ENCODE measurements at regions of chr6 and their contacts with region 1.

Region 1: DNA sequence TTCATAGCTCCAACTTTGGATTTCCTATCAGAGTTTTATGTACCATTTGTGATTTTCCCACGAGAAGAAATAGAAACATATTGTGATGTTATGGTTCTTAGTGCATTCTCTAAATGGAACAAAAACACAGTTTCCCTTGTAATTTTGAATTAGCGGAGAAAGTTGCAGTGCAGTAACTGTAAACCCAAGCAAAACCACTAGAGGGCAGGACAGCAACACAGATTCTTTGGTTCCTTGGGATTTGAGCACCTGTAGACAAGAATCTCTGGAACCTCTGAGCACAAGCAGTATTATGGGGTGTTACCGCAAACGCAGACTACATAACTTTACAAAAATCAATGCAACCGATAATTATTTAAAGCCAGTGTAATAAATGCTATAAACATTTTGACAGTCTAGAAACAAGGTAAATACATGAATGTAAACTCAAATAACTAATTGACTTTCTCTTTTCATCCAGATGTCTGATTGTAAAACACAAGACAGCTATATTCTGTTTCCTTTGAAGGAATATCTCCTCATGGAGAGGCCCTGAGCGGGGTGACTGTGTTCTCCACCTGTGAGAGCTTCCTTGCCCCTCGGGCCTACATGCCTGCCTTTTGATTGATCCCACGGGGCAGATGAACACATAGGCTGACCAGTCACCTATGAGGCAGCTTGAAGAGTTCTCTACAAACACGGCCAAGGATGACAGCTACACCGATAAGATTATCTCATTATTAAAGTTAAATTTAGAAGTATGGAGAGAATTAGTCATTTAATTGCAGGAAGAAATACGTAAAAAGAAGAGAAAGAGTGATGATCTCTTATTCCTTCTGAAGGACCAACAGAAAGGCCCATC is 67.5 kb upstream of the COL21A1 start:
- DNase-seq: peak; percentile 3 to 35
- ATAC-seq: peak; percentile 71 to 73; a peak in 5 of 6 replicates
- H3K4me3 ChIP-seq: no peak overlapping the region
- H3K27ac ChIP-seq: no peak overlapping the region
- H3K4me1 ChIP-seq: no peaks in the 10 kb centered on the region
- CTCF ChIP-seq: peak; percentile 63
- EP300 ChIP-seq: no peak
- POLR2A ChIP-seq: no peak
- RAD21 ChIP-seq: peak; percentile 73 to 75

Region 2: DNA sequence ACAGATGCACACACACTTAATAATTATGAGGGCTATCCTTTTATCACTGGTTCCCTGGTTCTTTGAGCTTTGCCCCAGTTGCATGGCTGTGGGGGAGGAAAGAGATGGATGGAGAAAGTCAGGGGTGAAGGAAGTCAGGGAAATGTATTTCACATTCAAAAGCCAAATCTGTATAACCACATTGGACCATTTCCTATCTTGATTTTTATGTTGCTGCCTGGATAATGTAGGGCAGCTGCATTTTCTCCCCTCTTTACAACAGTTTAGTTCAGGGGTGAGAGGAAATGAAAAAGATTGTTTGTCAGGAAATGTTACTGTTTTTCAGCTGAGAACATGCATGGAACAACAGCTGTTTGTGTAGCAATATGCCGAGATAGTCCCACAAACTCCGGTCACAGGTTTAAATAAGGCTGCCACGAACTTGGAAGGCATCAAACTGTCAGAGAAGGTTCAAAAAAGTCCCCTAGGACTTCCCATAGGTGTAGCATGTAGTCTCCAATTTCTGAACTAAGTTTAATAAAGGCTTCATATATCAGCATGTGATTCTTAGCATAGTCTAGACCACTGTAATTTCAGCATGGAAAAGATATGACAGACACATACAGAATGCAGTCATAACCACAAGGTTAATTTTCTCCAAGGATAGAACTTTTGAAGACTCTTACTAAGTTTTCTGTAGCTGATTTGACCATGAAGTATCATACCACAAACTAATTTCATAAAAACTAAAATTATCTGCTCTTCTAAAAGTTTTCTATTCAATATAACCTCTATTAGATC is 14.6 kb after region 1 on chr6:
- CTCF ChIA-PET with region 1: interaction called, 23 read pairs
- POLR2A ChIA-PET with region 1: no interaction called
- DNase-seq: no peak
- ATAC-seq: no peak
- H3K4me3 ChIP-seq: no peak overlapping the region
- H3K27ac ChIP-seq: no peak overlapping the region
- H3K4me1 ChIP-seq: no peaks in the 10 kb centered on the region
- CTCF ChIP-seq: no peak
- EP300 ChIP-seq: no peak
- POLR2A ChIP-seq: no peak
- RAD21 ChIP-seq: no peak

Region 3: DNA sequence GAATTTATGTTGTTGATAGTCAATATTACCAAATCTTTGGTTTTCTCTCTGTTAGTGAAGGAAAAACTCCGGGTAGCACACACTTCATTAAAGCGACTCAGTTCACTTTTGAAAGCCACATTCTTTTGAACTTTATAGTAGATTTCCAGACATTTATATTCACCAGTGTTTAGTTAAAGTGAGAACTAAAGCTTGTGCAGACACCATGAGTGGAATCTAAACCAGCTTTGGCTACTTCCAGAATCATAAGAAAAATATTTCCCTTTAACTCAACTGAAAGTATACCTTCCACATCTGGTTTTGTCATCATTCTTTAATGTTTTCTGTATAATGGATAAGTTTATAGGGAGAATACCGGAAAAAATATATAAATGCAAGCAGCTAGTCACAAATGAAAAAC is 24.6 kb after region 1 on chr6:
- CTCF ChIA-PET with region 1: interaction called, 13 read pairs
- POLR2A ChIA-PET with region 1: no interaction called
- DNase-seq: no peak
- ATAC-seq: no peak
- H3K4me3 ChIP-seq: no peak overlapping the region
- H3K27ac ChIP-seq: no peak overlapping the region
- H3K4me1 ChIP-seq: peaks cover 18% of the 10 kb centered on the region
- CTCF ChIP-seq: no peak
- EP300 ChIP-seq: no peak
- POLR2A ChIP-seq: no peak
- RAD21 ChIP-seq: no peak

Region 4: GRCh38 chr6:56595490-56596122 is 280.7 kb after region 1 on chr6:
- CTCF ChIA-PET with region 1: interaction called, 21 read pairs
- POLR2A ChIA-PET with region 1: no interaction called
- DNase-seq: peak; percentile 5 to 8
- ATAC-seq: peak; percentile 54 to 69; a peak in 5 of 6 replicates
- H3K4me3 ChIP-seq: no peak overlapping the region
- H3K27ac ChIP-seq: no peak overlapping the region
- H3K4me1 ChIP-seq: no peaks in the 10 kb centered on the region
- CTCF ChIP-seq: peak; percentile 56
- EP300 ChIP-seq: no peak
- POLR2A ChIP-seq: no peak
- RAD21 ChIP-seq: 0 out of 5 replicates have a peak, but pooled peaks of 1 of the 2 experiments have one; percentile 19

Region 5: DNA sequence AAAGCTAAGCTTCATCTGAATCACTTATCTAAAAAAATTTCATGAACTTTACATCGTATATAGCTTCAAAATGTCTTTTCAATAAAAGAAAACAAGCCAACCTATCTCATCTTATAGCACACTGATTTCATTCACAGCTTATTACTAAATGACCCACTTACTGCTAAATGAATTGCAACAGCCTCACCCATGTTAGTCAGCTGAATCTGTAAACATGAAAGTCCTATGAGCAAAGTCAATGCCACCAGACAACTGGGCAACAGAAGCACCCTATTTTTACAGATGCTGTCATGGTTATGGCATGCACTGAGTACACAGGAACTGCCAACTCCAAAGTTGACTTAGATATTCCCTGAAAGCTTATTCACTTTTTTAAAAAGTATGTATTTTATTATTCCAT is 369.0 kb after region 1 on chr6:
- CTCF ChIA-PET with region 1: no interaction called
- POLR2A ChIA-PET with region 1: no interaction called
- DNase-seq: peak; percentile 40 to 79
- ATAC-seq: peak; percentile 87 to 96
- H3K4me3 ChIP-seq: no peak overlapping the region
- H3K27ac ChIP-seq: peak overlapping the region; percentile 58 to 61
- H3K4me1 ChIP-seq: peaks cover 64% of the 10 kb centered on the region
- CTCF ChIP-seq: no peak
- EP300 ChIP-seq: peak; percentile 18 to 32; a peak in 2 of 5 replicates
- POLR2A ChIP-seq: no peak
- RAD21 ChIP-seq: no peak

Measured in A549 (cell line).